ENCODE measurements at regions of chr5 and their contacts with region 1.

Region 1: DNA sequence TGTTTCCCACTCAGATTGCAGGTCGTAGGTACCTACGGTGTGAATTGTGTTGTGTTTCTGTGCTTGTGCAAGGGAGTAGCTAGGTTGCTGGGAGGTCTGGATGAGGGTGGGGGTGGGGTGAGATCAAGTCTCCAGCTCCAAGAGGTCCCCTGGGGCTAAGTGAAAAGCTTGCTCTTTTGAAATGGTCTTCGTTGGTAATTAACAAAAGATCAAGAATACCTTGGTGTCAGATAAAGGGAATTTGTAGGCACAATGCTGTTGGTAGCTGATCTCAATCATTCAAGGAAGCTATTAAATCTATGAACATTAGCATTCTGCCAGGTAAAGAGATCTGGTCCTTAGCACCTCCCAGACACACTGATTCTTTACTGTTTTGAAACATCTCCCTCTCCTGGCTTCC is 928 bp upstream of the PCDHGC4 start:
- DNase-seq: no peak
- H3K4me3 Mint-ChIP-seq: no peak overlapping the region
- H3K27ac Mint-ChIP-seq: no peak overlapping the region
- H3K4me1 Mint-ChIP-seq: peaks cover 9% of the 10 kb centered on the region
- H3K27me3 Mint-ChIP-seq: peaks cover 81% of the 10 kb centered on the region

Region 2: GRCh38 chr5:141298376-141298775 is 185.5 kb before region 1 on chr5:
- CTCF ChIA-PET with region 1: interaction called, 10 read pairs
- intact Hi-C with region 1: no loop called
- DNase-seq: no peak
- H3K4me3 Mint-ChIP-seq: no peak overlapping the region
- H3K27ac Mint-ChIP-seq: no peak overlapping the region
- H3K4me1 Mint-ChIP-seq: no peaks in the 10 kb centered on the region
- H3K27me3 Mint-ChIP-seq: no peaks in the 10 kb centered on the region

Measured in activated naive CD4-positive, alpha-beta T cell treated with anti-CD3 and anti-CD28 coated beads for 36 hours (primary cell).